OCI-LY7 (cell line): ENCODE measurements at regions of chr6 and their contacts with region 1.

Region 1: DNA sequence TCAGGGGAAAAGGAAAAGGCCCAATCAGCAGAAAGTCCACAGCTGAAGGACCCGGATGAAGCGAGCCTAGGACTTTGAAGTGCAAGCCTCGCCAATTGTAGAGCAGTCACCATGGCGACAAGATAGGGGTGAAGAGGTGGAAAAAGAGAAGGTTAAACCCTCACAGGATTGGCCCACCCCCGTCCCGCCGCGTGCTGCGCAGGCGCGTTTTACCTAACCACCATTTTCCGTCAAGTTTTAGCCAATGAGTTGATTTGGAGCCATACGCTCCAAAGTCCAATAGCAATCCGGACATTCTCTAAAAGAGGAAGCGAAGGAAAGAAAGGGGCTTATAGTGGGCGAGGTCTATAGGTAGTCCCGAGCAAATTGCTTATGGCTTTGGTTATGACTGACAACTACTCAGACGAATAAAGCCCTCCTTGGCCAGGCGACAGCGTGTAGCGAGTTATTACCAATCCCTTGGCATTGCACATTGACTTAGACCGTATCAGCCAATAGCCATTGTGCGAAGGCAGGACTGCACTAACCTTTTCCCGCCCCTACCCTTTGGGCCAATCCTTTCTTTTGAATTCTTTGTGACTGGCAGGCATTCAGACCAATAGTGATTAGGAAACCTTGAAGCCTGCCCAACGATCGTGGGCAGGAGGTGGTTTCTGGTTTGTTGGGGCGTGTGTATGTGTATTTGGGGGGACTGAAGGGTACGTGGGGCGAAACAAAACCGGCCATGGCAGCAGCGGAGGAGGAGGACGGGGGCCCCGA is at the start of gene RNF5:
- DNase-seq: peak; percentile 100
- H3K4me3 ChIP-seq: peak within 1 kb of the TSS; percentile 74
- H3K27ac ChIP-seq: peak within 1 kb of the TSS; percentile 56
- H3K4me1 ChIP-seq: peaks cover 41% of the 10 kb centered on the region
- CTCF ChIP-seq: no peak
- total RNA-seq, gene RNF5: 51.3 and 59.9 TPM in 2 replicates

Region 2: GRCh38 chr6:32190054-32190851 is 12.3 kb after region 1 on chr6 and contains the start of gene PBX2:
- CTCF ChIA-PET with region 1: interaction called, 3 read pairs
- POLR2A ChIA-PET with region 1: interaction called, 16 read pairs
- intact Hi-C with region 1: loop called (anchors 1 kb)
- DNase-seq: peak; percentile 90
- H3K4me3 ChIP-seq: peak within 1 kb of the TSS; percentile 92
- H3K27ac ChIP-seq: peak within 1 kb of the TSS; percentile 79
- H3K4me1 ChIP-seq: peaks cover 68% of the 10 kb centered on the region
- CTCF ChIP-seq: no peak
- total RNA-seq, gene PBX2: 23.1 and 23.7 TPM in 2 replicates